ENCODE measurements at regions of chr5 and their contacts with region 1.

Region 1: GRCh38 chr5:91101600-91102379 is 281.3 kb downstream of the ARRDC3 start:
- ATAC-seq: peak; percentile 92 to 100 (median 96)
- H3K4me3 ChIP-seq: no peak overlapping the region
- H3K27ac ChIP-seq: no peak overlapping the region
- H3K4me1 ChIP-seq: peaks cover 2 to 11% of the 10 kb centered on the region in 2 donors

Region 2: GRCh38 chr5:90994796-90995195 is 107.0 kb before region 1 on chr5:
- in situ Hi-C with region 1: no loop called
- ATAC-seq: no peak
- H3K4me3 ChIP-seq: no peak overlapping the region
- H3K27ac ChIP-seq: no peak overlapping the region
- H3K4me1 ChIP-seq: no peaks in the 10 kb centered on the region

Region 3: DNA sequence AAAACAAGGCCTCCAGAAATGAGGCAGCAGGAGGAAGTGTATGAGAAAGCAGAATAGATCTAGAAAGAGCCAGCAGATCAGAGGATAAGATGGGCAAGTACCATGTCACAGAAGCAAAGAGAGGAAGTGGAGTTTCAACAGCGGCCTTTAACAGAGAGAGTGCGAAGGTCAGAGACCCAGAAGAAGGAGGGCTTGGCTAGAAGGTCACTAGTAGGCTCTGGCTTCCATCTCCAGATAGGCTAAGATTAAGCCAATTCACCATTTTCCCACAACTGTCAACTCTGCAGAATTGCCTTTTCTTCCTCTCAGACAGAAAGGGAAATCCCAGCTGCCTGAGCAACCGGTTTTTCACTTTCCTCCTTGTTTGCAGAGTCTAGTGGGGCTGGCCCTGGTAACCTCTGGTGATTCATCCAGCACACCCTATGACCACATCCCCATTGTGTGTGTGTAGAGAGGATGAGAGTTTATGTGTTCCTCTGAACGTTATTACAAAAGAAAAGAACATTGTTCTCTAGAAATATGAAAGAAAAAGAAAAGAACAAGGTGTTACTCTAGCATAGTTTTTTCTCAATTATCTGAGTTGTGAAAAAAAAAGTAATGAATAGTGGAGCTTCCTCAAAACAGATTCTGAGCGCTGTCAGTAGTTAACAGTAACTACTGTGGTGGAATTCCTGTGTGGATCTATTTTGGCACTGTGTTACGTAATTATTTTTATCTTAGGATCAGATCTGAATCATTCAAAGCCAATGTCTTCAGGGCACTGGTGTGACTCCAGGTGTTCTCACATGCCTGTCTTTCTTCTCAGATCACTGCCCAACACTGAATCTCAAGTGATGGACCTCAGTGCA is 61.0 kb after region 1 on chr5:
- in situ Hi-C with region 1: no loop called
- ATAC-seq: peak in 7 of 8 experiments; percentile 98 to 100 (median 100)
- H3K4me3 ChIP-seq: no peak overlapping the region
- H3K27ac ChIP-seq: peak overlapping the region in 1 of 2 donors; percentile 15
- H3K4me1 ChIP-seq: peaks cover 6 to 8% of the 10 kb centered on the region in 2 donors

Region 4: GRCh38 chr5:91219803-91220371 is 118.1 kb after region 1 on chr5:
- in situ Hi-C with region 1: loop called in 1 of 9 experiments (anchors 25 kb)
- ATAC-seq: peak in 3 of 8 experiments; percentile 36 to 69 (median 42)
- H3K4me3 ChIP-seq: no peak overlapping the region
- H3K27ac ChIP-seq: no peak overlapping the region
- H3K4me1 ChIP-seq: peaks cover 3 to 4% of the 10 kb centered on the region in 2 donors

Region 5: DNA sequence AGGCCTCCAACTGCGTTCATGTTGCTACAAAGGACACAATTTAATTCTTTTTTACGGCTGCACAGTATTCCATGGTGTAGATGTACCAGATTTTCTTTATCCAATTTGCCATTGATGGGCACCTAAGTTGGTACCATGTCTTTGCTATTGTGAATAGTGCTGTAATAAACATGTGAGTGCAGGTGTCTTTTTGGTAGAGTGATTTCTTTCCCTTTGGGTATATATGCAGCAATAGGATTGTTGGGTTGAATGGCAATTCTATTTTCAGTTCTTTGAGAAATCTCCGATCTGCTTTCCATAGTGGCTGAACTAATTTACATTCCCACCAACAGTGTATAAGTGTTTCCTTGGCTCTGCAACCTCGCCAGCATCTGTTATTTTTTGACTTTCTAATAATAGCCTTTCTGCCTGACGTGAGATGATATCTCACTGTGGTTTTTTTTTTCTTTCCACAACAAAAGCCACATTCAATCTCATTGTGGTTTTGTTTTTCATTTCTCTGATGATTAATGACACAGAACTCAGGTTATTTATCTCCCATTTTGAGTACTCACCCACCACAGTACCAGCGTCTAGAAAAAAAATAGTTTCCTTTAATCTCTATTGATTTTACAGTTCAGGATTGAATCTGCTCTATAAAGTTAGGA is 259.4 kb after region 1 on chr5:
- in situ Hi-C with region 1: loop called in 2 of 9 experiments (anchors 25 kb)
- ATAC-seq: no peak
- H3K4me3 ChIP-seq: no peak overlapping the region
- H3K27ac ChIP-seq: no peak overlapping the region
- H3K4me1 ChIP-seq: peaks cover 5 to 8% of the 10 kb centered on the region in 2 donors

Region 6: GRCh38 chr5:91383027-91383955 is 281.5 kb after region 1 on chr5 and contains the start of gene ARRDC3:
- in situ Hi-C with region 1: loop called in 5 of 9 experiments (anchors 10 to 25 kb)
- ATAC-seq: peak; percentile 39 to 79 (median 75)
- H3K4me3 ChIP-seq: peak within 1 kb of the TSS; percentile 61 to 86 (median 75)
- H3K27ac ChIP-seq: peak within 1 kb of the TSS; percentile 92 to 95
- H3K4me1 ChIP-seq: no peaks in the 10 kb centered on the region
- total RNA-seq, gene ARRDC3: 31.5 to 316 (median 154) TPM

Region 7: GRCh38 chr5:91419571-91420537 is 318.1 kb after region 1 on chr5:
- in situ Hi-C with region 1: no loop called
- ATAC-seq: peak in 3 of 8 experiments; percentile 24 to 53 (median 41)
- H3K4me3 ChIP-seq: no peak overlapping the region
- H3K27ac ChIP-seq: no peak overlapping the region
- H3K4me1 ChIP-seq: no peaks in the 10 kb centered on the region

Region 8: GRCh38 chr5:92070786-92071185 is 969.0 kb after region 1 on chr5:
- in situ Hi-C with region 1: no loop called
- ATAC-seq: no peak
- H3K4me3 ChIP-seq: no peak overlapping the region
- H3K27ac ChIP-seq: no peak overlapping the region
- H3K4me1 ChIP-seq: no peaks in the 10 kb centered on the region